CD8-positive, alpha-beta memory T cell (primary cell): ENCODE measurements at regions of chr2 and their contacts with region 1.

Region 1: DNA sequence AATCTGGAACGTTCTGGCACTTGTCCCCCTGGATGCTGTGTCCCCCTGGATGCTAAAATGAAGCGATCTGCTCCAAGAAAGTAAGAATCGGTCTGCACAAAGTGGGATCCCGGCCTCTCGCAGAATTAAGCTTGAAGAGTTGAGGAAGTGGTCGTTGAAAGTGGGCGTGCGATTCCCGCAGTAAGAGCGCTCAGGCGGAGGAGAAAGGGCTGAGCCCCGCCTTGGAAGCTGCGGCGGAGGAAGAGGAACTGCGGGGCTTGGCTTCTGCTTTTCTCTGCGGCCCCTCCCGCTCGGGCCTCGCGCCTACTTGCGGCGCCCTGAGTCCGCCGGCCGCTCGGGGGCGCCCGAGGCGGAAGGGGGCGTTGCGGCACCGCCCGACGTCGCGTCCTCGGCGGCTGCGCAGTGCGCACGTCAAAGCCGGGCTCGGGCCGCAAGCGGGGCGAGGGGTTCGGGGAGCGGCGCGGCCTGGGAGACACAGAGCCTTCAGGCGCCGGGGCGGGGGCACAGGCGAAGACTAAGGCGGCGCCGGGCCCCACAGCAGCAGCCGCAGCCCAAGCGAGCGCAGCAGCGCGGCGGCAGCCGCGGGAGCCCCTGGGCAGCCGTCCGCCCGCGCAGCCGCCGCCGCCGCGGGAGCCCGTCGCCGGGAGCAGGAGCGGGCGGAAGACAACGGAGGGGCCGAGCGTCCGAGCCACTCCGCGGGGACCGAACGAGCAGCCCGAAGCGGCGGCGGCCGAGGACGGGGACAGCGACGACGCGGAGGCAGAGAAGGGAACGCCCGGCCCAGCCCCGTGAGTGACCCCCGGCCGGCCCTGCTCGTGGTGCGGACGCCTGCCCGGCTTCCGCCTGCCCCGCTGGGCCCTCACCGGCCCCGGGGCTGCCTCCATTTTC is at the start of gene CAB39:
- DNase-seq: peak; percentile 84 to 91 (median 88)
- H3K4me3 ChIP-seq: peak within 1 kb of the TSS; percentile 96
- H3K4me3 Mint-ChIP-seq: peak within 1 kb of the TSS; percentile 92 to 100 (median 94)
- H3K27ac ChIP-seq: peak within 1 kb of the TSS; percentile 71
- H3K27ac Mint-ChIP-seq: peak within 1 kb of the TSS; percentile 86 to 100 (median 97)
- H3K4me1 ChIP-seq: peaks cover 37% of the 10 kb centered on the region
- H3K4me1 Mint-ChIP-seq: peaks cover 34 to 46% (median 42%) of the 10 kb centered on the region in 3 donors
- H3K27me3 ChIP-seq: no peaks in the 10 kb centered on the region
- H3K27me3 Mint-ChIP-seq: peaks cover 0 to 2% of the 10 kb centered on the region in 2 donors
- total RNA-seq, gene CAB39: 136 to 147 TPM

Region 2: GRCh38 chr2:230475143-230475542 is 237.5 kb before region 1 on chr2:
- CTCF ChIA-PET with region 1: no interaction called
- POLR2A ChIA-PET with region 1: no interaction called
- DNase-seq: no peak
- H3K4me3 ChIP-seq: no peak overlapping the region
- H3K4me3 Mint-ChIP-seq: no peak overlapping the region
- H3K27ac ChIP-seq: no peak overlapping the region
- H3K27ac Mint-ChIP-seq: peak overlapping the region in 4 of 8 donors; percentile 11 to 67 (median 40)
- H3K4me1 ChIP-seq: peaks cover 23% of the 10 kb centered on the region
- H3K4me1 Mint-ChIP-seq: peaks cover 30 to 56% (median 45%) of the 10 kb centered on the region in 3 donors
- H3K27me3 ChIP-seq: no peaks in the 10 kb centered on the region
- H3K27me3 Mint-ChIP-seq: no peaks in the 10 kb centered on the region

Region 3: GRCh38 chr2:230793572-230794359 is 81.1 kb after region 1 on chr2:
- CTCF ChIA-PET with region 1: interaction called, 34 read pairs
- POLR2A ChIA-PET with region 1: interaction called, 11 read pairs
- DNase-seq: peak; percentile 51 to 85 (median 57)
- H3K4me3 ChIP-seq: peak overlapping the region; percentile 24
- H3K4me3 Mint-ChIP-seq: peak overlapping the region; percentile 11 to 80 (median 71)
- H3K27ac ChIP-seq: peak overlapping the region; percentile 51
- H3K27ac Mint-ChIP-seq: peak overlapping the region in 7 of 8 donors; percentile 78 to 98 (median 92)
- H3K4me1 ChIP-seq: peaks cover 61% of the 10 kb centered on the region
- H3K4me1 Mint-ChIP-seq: peaks cover 54 to 64% (median 64%) of the 10 kb centered on the region in 3 donors
- H3K27me3 ChIP-seq: no peaks in the 10 kb centered on the region
- H3K27me3 Mint-ChIP-seq: no peaks in the 10 kb centered on the region

Region 4: GRCh38 chr2:230947908-230948365 is 235.2 kb after region 1 on chr2:
- CTCF ChIA-PET with region 1: no interaction called
- POLR2A ChIA-PET with region 1: no interaction called
- DNase-seq: no peak
- H3K4me3 ChIP-seq: no peak overlapping the region
- H3K4me3 Mint-ChIP-seq: peak overlapping the region in 1 of 7 donors; percentile 17
- H3K27ac ChIP-seq: no peak overlapping the region
- H3K27ac Mint-ChIP-seq: no peak overlapping the region
- H3K4me1 ChIP-seq: peaks cover 4% of the 10 kb centered on the region
- H3K4me1 Mint-ChIP-seq: peaks cover 17 to 64% (median 33%) of the 10 kb centered on the region in 3 donors
- H3K27me3 ChIP-seq: peaks cover 4% of the 10 kb centered on the region
- H3K27me3 Mint-ChIP-seq: peaks cover 5 to 7% of the 10 kb centered on the region in 2 donors